Adrenal gland (tissue), 19 donors: ENCODE measurements at regions of chrX and their contacts with region 1.

Region 1: DNA sequence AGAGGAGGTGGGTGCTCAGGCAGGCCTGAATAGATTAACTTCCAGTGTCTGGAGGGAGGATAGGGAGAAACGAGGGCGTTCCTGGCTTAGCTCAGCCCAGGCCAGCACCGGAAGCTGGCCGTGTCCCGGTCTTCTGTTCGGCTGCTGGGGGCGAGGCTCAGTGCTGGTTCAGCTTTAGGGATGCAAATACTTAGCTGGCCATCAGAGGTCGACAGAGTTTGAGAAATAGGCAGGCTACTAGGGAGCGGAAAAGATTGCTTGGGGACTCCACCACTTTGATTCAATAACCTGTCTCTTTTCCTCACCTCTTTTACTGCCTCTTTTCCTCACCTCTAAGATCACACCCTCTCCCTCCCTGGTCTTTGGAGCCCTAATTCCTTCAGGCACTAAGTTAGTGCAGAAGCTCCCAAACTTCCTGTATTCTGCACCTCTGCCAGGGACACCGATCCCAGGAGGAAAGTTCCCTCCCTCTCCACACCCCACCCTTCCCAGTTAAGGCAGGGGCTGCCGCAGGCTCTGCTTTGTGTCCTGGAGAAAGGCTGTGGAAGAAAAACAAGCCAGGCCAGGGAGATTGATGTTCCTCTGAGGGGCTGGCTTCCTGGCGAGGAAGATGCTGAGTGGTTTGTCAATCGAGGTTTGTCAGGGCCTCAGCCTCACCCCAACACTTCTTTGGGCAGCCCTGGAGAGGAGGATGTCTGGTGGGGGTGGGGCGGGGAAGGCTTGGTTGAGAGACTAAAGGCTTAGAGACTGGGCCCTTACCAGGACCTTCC is 6.0 kb upstream of the EFNB1 start:
- DNase-seq: peak in 5 of 7 donors; percentile 39 to 69 (median 55)
- H3K4me3 ChIP-seq: no peak overlapping the region
- H3K27ac ChIP-seq: no peak overlapping the region
- H3K4me1 ChIP-seq: no peaks in the 10 kb centered on the region
- H3K27me3 ChIP-seq: peaks cover 26% of the 10 kb centered on the region
- CTCF ChIP-seq: peak; percentile 33 to 68 (median 56)
- POLR2A ChIP-seq: no peak

Region 2: GRCh38 chrX:68365341-68365740 is 457.5 kb before region 1 on chrX:
- intact Hi-C with region 1: no loop called
- DNase-seq: no peak
- H3K4me3 ChIP-seq: no peak overlapping the region
- H3K27ac ChIP-seq: no peak overlapping the region
- H3K4me1 ChIP-seq: no peaks in the 10 kb centered on the region
- H3K27me3 ChIP-seq: peaks cover 3% of the 10 kb centered on the region
- CTCF ChIP-seq: no peak
- POLR2A ChIP-seq: no peak

Region 3: GRCh38 chrX:69280933-69281332 is 458.1 kb after region 1 on chrX:
- intact Hi-C with region 1: loop called (anchors 5 kb)
- DNase-seq: no peak
- H3K4me3 ChIP-seq: no peak overlapping the region
- H3K27ac ChIP-seq: no peak overlapping the region
- H3K4me1 ChIP-seq: peaks cover 0 to 4% of the 10 kb centered on the region in 2 donors
- H3K27me3 ChIP-seq: peaks cover 27% of the 10 kb centered on the region
- CTCF ChIP-seq: no peak
- POLR2A ChIP-seq: no peak

Region 4: DNA sequence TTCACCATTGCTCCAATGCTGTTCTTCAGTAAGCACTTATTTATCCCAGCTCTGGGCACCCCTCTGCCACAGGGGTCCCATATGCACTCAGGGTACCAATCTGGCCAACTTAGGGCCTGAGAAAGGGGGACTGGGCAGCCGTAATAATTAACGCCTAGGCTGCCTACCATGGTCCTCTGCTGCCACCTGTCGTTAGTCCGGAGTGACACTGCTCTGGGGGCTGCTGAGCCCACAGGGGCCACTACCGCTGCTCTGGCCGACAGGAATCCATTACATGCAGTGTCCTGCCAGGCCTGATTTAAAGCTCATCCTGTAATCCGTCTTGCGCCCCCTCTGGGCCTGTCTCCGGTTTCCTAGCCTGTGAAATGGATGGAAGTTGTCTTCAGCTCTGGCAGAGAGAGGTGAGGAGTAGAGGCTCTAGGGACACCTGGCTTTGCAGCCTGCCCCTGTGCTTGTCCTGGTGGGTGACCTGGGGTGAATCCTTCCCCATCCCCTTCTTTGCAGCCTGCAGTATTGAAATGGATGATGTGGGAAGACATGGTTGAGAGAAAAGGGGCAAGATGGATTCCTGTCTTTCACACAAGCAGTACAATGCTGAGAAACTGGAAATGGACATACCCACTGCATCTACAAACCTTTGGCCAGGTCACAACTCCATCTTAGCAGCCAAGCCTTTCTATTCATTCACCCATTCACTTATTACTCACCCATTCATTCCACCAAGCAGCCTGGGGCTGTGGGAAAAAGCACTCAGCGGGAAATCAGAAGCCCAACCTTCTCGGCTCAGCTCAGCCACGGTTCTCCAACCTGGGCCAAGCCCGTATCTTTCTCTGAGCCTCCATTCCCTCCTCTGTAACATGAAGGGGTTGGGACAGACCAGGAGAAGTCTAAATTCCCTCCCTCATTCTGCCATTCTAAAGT is 565.0 kb after region 1 on chrX:
- intact Hi-C with region 1: loop called in 1 of 2 experiments (anchors 5 kb)
- DNase-seq: peak in 6 of 7 donors; percentile 32 to 57 (median 44)
- H3K4me3 ChIP-seq: no peak overlapping the region
- H3K27ac ChIP-seq: no peak overlapping the region
- H3K4me1 ChIP-seq: no peaks in the 10 kb centered on the region
- H3K27me3 ChIP-seq: peaks cover 51% of the 10 kb centered on the region
- CTCF ChIP-seq: peak; percentile 50 to 70 (median 58)
- POLR2A ChIP-seq: no peak